WTC11 (cell line): ENCODE measurements at regions of chr1 and their contacts with region 1.

Region 1: GRCh38 chr1:224851210-224851847 is 78.1 kb upstream of the DNAH14 start:
- DNase-seq: peak; percentile 83
- ATAC-seq: peak; percentile 67
- H3K4me3 Mint-ChIP-seq: no peak overlapping the region
- H3K27ac Mint-ChIP-seq: no peak overlapping the region
- H3K4me1 Mint-ChIP-seq: peaks cover 32% of the 10 kb centered on the region
- H3K27me3 Mint-ChIP-seq: no peaks in the 10 kb centered on the region; the same call in 1 of the 2 replicates
- CTCF ChIP-seq: peak; percentile 68

Region 2: GRCh38 chr1:224513787-224514209 is 337.5 kb before region 1 on chr1:
- CTCF ChIA-PET with region 1: interaction called, 15 read pairs
- POLR2A ChIA-PET with region 1: no interaction called
- DNase-seq: peak; percentile 95
- ATAC-seq: peak; percentile 93
- H3K4me3 Mint-ChIP-seq: no peak overlapping the region
- H3K27ac Mint-ChIP-seq: peak overlapping the region; percentile 26; the same call in 1 of the 2 replicates
- H3K4me1 Mint-ChIP-seq: peaks cover 15% of the 10 kb centered on the region
- H3K27me3 Mint-ChIP-seq: no peaks in the 10 kb centered on the region; the same call in 1 of the 2 replicates
- CTCF ChIP-seq: peak; percentile 86

Region 3: DNA sequence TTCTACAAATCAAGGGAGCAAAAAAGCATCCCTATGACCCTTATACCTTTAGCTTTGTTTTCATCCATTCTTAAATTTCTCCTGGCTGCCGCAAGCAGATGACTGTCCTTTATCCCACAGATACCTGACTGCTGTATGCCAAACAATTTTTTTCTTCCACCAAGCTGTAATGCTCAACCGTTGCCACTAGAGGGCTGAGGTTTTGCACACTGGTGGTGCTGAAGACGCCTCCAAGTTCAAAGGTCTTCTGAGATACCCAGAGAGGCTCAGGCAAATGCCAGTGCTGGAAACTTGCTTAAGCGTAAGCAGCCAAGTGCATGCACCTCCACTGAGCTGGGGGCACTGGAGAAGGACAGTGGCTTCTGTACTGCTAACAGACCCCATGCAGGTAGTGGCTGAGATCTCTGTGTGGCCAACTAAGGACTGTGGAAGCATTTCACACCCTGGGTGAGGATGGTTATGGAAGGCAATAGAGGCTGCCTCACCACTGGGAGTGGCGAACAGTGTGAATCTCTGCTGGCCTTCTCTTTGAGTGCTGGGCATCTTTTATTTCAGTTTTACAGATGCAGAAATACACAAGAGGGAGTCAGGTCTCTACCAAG is 206.7 kb before region 1 on chr1:
- CTCF ChIA-PET with region 1: interaction called, 18 read pairs
- POLR2A ChIA-PET with region 1: no interaction called
- DNase-seq: peak; percentile 73
- ATAC-seq: peak; percentile 72
- H3K4me3 Mint-ChIP-seq: no peak overlapping the region
- H3K27ac Mint-ChIP-seq: no peak overlapping the region
- H3K4me1 Mint-ChIP-seq: peaks cover 24% of the 10 kb centered on the region
- H3K27me3 Mint-ChIP-seq: no peaks in the 10 kb centered on the region
- CTCF ChIP-seq: peak; percentile 93

Region 4: DNA sequence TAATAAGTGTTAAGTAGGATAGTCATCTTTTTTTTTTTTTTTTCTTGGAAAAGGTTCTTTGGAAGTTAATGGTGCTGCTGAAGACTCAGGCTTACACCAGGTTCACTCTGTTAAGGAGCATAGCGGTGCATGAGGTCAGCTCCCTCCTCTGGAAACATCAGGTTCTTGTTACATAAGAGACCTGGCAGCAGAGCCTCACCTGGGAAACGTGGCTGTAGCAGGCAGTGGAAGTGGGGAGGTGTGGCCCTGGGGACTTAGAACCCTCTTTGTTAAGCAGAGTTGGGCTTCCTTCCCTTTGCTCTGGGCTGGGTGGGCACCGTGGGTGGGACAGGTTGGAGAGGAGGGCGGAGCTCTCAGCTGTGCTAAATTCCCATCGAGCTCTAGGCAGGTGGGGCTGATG is 131.1 kb before region 1 on chr1:
- CTCF ChIA-PET with region 1: interaction called, 10 read pairs
- POLR2A ChIA-PET with region 1: no interaction called
- DNase-seq: no peak
- ATAC-seq: peak; percentile 72
- H3K4me3 Mint-ChIP-seq: no peak overlapping the region
- H3K27ac Mint-ChIP-seq: no peak overlapping the region
- H3K4me1 Mint-ChIP-seq: peaks cover 22% of the 10 kb centered on the region
- H3K27me3 Mint-ChIP-seq: no peaks in the 10 kb centered on the region
- CTCF ChIP-seq: no peak

Region 5: GRCh38 chr1:224863970-224864369 is 12.6 kb after region 1 on chr1:
- CTCF ChIA-PET with region 1: interaction called, 38 read pairs
- POLR2A ChIA-PET with region 1: no interaction called
- DNase-seq: no peak
- ATAC-seq: no peak
- H3K4me3 Mint-ChIP-seq: no peak overlapping the region
- H3K27ac Mint-ChIP-seq: no peak overlapping the region
- H3K4me1 Mint-ChIP-seq: no peaks in the 10 kb centered on the region
- H3K27me3 Mint-ChIP-seq: no peaks in the 10 kb centered on the region
- CTCF ChIP-seq: no peak

Region 6: GRCh38 chr1:224884361-224884801 is 33.1 kb after region 1 on chr1:
- CTCF ChIA-PET with region 1: interaction called, 10 read pairs
- POLR2A ChIA-PET with region 1: no interaction called
- DNase-seq: no peak
- ATAC-seq: peak; percentile 47
- H3K4me3 Mint-ChIP-seq: no peak overlapping the region
- H3K27ac Mint-ChIP-seq: 0 out of 2 replicates have a peak overlapping the region, but pooled peaks have one; percentile 5
- H3K4me1 Mint-ChIP-seq: peaks cover 50% of the 10 kb centered on the region
- H3K27me3 Mint-ChIP-seq: peaks cover 12% of the 10 kb centered on the region
- CTCF ChIP-seq: no peak

Region 7: DNA sequence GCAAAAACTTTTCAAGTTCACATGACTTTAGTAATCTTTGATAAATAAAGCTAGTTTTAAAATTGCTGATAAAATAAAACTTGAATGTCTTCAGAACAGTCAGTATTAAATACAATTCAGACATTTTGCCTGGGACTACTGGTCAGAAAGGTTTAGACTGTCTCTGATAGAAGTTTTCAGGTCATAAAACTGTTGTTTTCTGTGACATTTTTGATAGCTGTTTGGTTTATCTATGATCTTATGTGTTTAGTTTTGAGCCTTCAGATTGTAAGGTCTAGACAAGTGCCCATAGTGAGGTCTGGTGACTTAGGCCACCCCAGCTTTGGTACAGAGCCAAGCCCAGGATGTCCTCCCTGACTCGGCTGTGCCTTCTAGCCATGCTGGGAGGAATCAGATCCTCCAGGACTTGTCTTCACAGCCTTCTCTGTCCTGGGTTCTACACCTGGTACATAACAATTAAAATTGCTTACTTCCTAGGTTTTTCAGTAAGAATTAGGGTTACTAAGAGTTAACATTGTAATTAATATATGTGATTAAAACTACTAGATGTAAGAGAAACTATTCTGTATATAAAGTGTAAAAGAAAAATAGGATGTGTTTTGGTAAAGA is 63.1 kb after region 1 on chr1:
- CTCF ChIA-PET with region 1: no interaction called
- POLR2A ChIA-PET with region 1: no interaction called
- DNase-seq: no peak
- ATAC-seq: no peak
- H3K4me3 Mint-ChIP-seq: no peak overlapping the region
- H3K27ac Mint-ChIP-seq: no peak overlapping the region
- H3K4me1 Mint-ChIP-seq: no peaks in the 10 kb centered on the region
- H3K27me3 Mint-ChIP-seq: peaks cover 12% of the 10 kb centered on the region
- CTCF ChIP-seq: no peak

Region 8: DNA sequence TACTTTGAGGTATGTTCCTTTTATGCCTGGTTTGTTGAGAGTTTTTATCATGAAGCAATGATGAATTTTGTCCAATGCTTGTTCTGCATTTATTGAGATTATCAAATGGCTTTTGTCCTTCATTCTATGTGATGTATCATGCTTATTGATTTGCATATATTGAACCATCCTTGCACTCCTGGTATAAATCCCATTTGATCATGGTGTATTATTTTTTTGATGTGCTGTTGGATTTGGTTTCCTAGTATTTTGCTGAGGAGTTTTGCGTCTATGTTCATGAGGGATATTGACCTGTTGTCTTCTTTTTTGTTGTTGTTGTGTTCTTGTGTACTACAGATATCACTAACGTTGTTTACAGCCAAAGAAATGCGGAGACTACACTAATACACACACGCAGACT is 82.3 kb after region 1 on chr1:
- CTCF ChIA-PET with region 1: no interaction called
- POLR2A ChIA-PET with region 1: no interaction called
- DNase-seq: no peak
- ATAC-seq: no peak
- H3K4me3 Mint-ChIP-seq: no peak overlapping the region
- H3K27ac Mint-ChIP-seq: no peak overlapping the region
- H3K4me1 Mint-ChIP-seq: no peaks in the 10 kb centered on the region
- H3K27me3 Mint-ChIP-seq: no peaks in the 10 kb centered on the region
- CTCF ChIP-seq: no peak